ENCODE measurements at regions of chr1 and their contacts with region 1.

Region 1: DNA sequence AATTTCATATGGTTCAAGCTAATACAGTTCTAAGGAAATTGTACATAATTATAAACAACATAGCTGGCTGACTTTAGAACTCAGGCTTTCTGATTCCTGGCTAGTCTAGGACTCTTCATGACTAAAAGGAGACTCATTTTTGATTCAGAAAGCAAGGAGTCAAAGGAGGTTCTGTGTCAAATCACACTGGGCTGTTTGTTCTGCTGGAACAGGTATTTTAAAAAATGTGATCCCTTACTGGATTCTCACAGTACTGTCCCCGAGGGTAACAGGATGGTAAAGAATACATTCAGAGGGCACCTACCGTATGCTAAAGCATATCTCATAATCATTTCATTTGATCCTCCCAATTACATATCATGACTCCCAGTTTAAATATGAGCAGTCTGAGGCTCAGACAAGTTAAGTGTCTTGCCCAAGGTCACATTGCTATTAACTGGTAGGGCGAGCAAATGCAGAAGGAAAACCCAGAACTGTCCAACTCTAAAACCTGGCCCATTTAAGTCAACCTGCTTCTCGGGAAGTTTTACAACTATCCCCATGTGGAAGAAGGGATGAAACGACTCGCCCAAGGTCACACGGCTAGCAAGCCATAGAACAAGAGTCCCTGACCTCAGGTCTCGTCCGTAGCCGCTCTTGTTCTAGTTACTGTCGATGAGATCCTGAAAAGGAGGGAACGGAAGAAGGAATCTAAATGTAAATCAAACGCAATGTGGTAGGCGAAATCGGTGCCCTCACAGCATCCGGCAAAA is 675 bp downstream of the MYSM1 start:
- DNase-seq: no peak
- H3K4me3 Mint-ChIP-seq: peak overlapping the region; percentile 93
- H3K27ac Mint-ChIP-seq: peak overlapping the region; percentile 91
- H3K4me1 Mint-ChIP-seq: peaks cover 19% of the 10 kb centered on the region
- H3K27me3 Mint-ChIP-seq: peaks cover 2% of the 10 kb centered on the region

Region 2: DNA sequence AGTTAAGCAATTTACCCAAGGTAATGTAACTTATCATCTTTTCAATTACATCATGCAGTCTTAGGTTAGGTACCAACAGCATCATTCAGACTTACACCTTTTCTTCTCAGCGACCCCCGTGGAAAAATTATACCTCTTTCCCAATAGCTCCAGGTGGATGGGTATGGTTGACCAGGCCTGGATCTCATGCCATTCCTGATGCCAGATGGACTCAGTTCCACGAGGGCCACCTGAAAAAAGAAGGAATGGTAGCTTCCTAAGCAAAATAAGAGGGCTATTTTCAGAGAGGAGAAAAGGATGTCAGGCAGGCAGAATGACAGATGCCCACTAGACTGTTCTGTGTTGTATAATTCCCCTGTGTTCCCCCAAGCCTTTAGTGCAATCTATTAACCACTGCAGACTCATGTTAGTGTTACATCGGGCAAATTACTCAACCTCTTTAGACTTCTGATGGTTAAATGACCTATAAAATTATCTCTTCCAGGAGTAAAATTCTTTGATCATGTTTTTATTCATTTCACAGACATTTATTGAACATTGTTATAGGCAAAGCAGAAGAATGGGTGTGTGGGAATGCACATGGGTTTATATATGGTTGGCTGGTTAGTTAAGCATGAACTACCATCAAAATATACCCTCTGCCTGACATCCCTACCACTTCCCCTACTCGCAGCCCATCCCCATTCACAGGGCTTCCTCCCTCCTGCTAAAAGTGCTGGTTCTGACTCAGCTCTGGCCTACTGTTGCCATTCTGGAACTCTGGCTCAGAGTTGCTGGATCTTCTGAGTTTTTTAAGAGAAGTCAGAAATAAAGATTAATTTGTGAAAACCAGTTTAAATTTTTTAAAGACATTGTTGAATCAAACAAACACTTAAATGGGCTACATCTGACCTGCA is 11.3 kb after region 1 on chr1:
- CTCF ChIA-PET with region 1: interaction called, 7 read pairs
- POLR2A ChIA-PET with region 1: interaction called, 19 read pairs
- DNase-seq: no peak
- H3K4me3 Mint-ChIP-seq: no peak overlapping the region
- H3K27ac Mint-ChIP-seq: no peak overlapping the region
- H3K4me1 Mint-ChIP-seq: peaks cover 1% of the 10 kb centered on the region
- H3K27me3 Mint-ChIP-seq: peaks cover 10% of the 10 kb centered on the region

Region 3: DNA sequence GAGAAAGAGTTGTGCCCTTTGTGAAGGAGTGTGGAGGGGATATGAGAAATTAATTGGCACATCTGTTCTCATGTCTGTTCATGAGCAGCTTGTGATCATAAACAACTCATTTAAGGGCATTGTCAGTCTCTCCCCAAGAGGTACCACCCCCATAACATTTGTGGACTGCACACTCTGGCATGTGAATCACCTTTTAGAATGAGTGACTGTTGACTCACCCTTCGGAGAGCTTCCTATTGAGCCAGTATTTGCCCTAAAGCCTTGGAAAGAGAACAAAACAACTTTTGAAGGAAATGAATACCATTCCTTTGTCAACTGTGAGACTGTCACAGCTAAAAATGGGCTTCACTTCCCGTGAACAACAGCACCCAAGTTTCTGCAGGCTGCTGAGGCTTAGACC is 28.2 kb after region 1 on chr1:
- CTCF ChIA-PET with region 1: interaction called, 17 read pairs
- POLR2A ChIA-PET with region 1: interaction called, 6 read pairs
- DNase-seq: no peak
- H3K4me3 Mint-ChIP-seq: no peak overlapping the region
- H3K27ac Mint-ChIP-seq: peak overlapping the region; percentile 69
- H3K4me1 Mint-ChIP-seq: peaks cover 30% of the 10 kb centered on the region
- H3K27me3 Mint-ChIP-seq: no peaks in the 10 kb centered on the region